MCF 10A (cell line): ENCODE measurements at regions of chr7 and their contacts with region 1.

Region 1: GRCh38 chr7:79165225-79165624 is 288.2 kb downstream of the MAGI2 start:
- DNase-seq: no peak
- H3K4me3 Mint-ChIP-seq: no peak overlapping the region
- H3K27ac Mint-ChIP-seq: no peak overlapping the region
- H3K4me1 Mint-ChIP-seq: no peaks in the 10 kb centered on the region
- H3K27me3 Mint-ChIP-seq: peaks cover 61% of the 10 kb centered on the region
- CTCF ChIP-seq: no peak

Region 2: DNA sequence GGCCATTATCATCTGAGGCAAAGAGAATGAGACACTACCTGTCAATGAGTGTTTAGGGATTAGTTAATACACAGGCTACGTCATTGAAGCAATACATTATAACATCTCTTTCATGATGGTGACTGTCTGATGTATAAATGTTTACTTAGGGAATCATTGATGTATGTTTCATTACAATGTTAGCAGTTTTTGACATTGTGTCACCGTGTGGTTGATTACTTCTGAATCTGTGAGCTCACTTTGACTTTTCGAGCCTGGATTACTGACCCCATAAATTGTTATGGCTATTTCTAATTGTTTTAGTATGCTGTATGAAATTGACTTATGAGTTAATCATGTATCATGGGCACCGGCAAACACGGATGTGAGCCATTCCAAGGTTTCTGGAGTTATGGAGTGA is 205.7 kb before region 1 on chr7:
- CTCF ChIA-PET with region 1: no interaction called
- POLR2A ChIA-PET with region 1: no interaction called
- intact Hi-C with region 1: loop called (anchors 10 kb)
- DNase-seq: no peak
- H3K4me3 Mint-ChIP-seq: no peak overlapping the region
- H3K27ac Mint-ChIP-seq: no peak overlapping the region
- H3K4me1 Mint-ChIP-seq: no peaks in the 10 kb centered on the region
- H3K27me3 Mint-ChIP-seq: peaks cover 55% of the 10 kb centered on the region
- CTCF ChIP-seq: no peak

Region 3: DNA sequence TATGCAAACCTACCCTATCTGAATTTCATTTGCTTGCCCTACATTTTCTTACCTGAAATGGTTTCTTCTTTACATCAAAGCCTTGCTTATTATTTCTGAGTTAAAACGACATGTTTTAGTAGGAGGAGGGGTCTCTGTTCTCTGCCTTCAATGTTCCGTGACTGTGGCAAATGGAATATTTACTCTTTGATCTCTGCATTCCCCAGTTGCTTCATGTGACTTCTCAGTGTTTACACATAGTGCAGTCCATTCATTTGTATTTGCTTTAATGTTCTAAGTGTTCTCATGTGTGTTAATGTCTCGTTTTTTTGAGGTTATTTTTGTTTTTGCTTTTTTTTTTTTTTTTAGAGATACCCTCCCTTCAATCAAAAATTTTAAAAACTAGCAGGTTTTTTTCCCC is 1045.2 kb after region 1 on chr7:
- CTCF ChIA-PET with region 1: no interaction called
- POLR2A ChIA-PET with region 1: no interaction called
- intact Hi-C with region 1: no loop called
- DNase-seq: no peak
- H3K4me3 Mint-ChIP-seq: no peak overlapping the region
- H3K27ac Mint-ChIP-seq: peak overlapping the region; percentile 10
- H3K4me1 Mint-ChIP-seq: peaks cover 11% of the 10 kb centered on the region
- H3K27me3 Mint-ChIP-seq: no peaks in the 10 kb centered on the region
- CTCF ChIP-seq: no peak